BJ (cell line): ENCODE measurements at regions of chr12 and their contacts with region 1.

Region 1: GRCh38 chr12:109885616-109886015 is 5.3 kb upstream of the GLTP start:
- DNase-seq: no peak
- H3K4me3 ChIP-seq: no peak overlapping the region
- H3K27me3 ChIP-seq: no peaks in the 10 kb centered on the region
- CTCF ChIP-seq: no peak

Region 2: GRCh38 chr12:109625131-109625559 is 260.5 kb before region 1 on chr12:
- CTCF ChIA-PET with region 1: no interaction called
- POLR2A ChIA-PET with region 1: no interaction called
- DNase-seq: no peak
- H3K4me3 ChIP-seq: no peak overlapping the region
- H3K27me3 ChIP-seq: peaks cover 12% of the 10 kb centered on the region
- CTCF ChIP-seq: peak; percentile 35; the same call in 1 of the 2 replicates

Region 3: GRCh38 chr12:109818905-109819500 is 66.6 kb before region 1 on chr12:
- CTCF ChIA-PET with region 1: no interaction called
- POLR2A ChIA-PET with region 1: no interaction called
- DNase-seq: peak; percentile 68
- H3K4me3 ChIP-seq: no peak overlapping the region
- H3K27me3 ChIP-seq: no peaks in the 10 kb centered on the region; the same call in 1 of the 2 replicates
- CTCF ChIP-seq: no peak

Region 4: DNA sequence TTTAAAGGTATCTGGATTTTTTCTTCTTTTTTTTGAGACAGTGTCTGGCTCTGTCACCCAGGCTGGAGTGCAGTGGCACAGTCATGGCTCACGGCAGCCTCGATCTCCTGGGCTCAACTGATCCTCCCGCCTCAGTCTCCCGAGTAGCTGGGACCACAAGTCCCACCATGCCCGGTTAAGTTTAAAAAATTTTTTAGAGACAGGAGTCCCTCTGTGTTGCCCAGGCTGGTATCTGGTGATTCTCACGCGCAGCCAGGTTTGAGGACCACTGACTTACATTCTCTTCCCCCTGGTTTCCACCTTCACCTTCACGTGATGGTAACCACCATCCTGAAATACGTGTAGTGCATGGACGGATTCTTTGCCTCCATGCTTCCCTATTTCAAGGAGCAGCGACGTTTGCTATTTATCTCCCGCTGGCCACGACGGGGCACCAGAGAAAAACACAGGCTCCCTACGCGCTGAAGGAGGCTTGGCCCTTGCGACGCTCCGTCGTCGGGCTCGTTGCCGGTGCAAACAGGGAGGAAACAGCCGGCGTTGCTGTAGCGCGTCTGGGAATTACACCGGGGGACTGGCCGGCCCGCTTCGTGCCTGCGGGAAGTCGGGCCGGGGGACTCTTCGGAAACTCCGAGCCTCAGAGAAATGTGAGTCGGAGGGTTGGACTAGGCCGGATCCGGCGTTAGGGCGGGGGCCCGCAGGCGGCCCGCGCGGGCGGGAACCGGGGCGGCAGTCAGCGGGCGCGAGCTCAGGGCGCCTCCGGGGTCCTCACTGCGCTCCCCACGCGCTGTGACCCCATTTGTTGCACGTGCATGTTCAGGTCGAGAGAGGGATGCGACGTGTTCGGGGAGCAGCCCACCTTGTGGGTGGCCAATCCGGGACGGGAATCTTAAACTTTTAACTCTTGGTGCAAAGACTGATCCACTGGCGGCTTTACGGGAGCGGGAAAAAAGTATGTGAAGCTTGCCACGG is 14.5 kb after region 1 on chr12 and contains the start of gene TCHP:
- CTCF ChIA-PET with region 1: interaction called, 3 read pairs
- POLR2A ChIA-PET with region 1: interaction called, 12 read pairs
- DNase-seq: peak; percentile 51
- H3K4me3 ChIP-seq: peak within 1 kb of the TSS; percentile 61
- H3K27me3 ChIP-seq: no peaks in the 10 kb centered on the region
- CTCF ChIP-seq: peak; percentile 57
- polyA plus RNA-seq, gene TCHP: 6.3 and 9.1 TPM in 2 replicates

Region 5: DNA sequence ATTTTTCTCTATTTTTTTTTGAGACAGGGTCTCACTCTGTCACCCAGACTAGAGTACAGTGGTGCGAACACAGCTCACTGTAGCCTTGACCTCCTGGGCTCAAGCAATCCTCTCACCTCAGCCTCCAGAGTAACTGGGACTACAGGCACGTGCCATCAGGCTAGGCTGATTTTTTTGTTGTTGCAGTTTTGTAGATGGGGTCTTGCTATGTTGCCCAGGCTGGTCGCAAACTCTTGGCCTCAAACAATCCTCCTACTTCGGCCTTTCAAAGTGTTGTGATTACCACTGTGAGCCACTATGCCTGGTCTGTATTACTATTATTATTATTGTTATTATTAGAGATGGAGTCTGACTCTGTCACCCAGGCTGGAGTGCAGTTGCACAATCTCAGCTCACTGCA is 87.2 kb after region 1 on chr12:
- CTCF ChIA-PET with region 1: no interaction called
- POLR2A ChIA-PET with region 1: no interaction called
- DNase-seq: no peak
- H3K4me3 ChIP-seq: no peak overlapping the region
- H3K27me3 ChIP-seq: no peaks in the 10 kb centered on the region
- CTCF ChIP-seq: no peak